Lower leg skin (tissue), 4 donors: ENCODE measurements at regions of chr1 and their contacts with region 1.

Region 1: DNA sequence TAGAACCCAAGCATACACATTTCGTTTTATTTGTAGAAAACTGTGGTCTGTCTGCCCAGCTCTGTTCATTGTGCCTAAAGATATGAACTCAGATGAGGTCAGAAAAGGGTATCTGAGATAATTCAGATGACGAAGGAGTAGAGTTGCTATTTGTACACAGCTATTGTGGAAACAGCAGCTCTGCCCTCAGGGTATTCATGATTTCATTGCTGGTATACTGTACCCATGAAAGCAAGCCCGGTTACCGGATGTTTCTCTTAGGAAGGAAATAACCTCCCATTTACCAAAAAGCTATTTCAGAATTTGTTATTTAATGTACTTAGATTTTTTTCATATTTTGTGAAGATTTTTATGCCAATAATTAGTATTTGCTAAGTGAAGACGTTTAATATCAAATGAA is 37.8 kb downstream of the SMAP2 start:
- DNase-seq: no peak
- H3K4me3 ChIP-seq: no peak overlapping the region
- CTCF ChIP-seq: no peak
- POLR2A ChIP-seq: no peak

Region 2: GRCh38 chr1:40315239-40315794 is 96.0 kb before region 1 on chr1:
- intact Hi-C with region 1: loop called (anchors 10 kb)
- DNase-seq: peak; percentile 77 to 96
- H3K4me3 ChIP-seq: peak overlapping the region; percentile 9
- CTCF ChIP-seq: peak in 1 of 3 donors; percentile 94
- POLR2A ChIP-seq: no peak